B cell (primary cell): ENCODE measurements at regions of chr11 and their contacts with region 1.

Region 1: DNA sequence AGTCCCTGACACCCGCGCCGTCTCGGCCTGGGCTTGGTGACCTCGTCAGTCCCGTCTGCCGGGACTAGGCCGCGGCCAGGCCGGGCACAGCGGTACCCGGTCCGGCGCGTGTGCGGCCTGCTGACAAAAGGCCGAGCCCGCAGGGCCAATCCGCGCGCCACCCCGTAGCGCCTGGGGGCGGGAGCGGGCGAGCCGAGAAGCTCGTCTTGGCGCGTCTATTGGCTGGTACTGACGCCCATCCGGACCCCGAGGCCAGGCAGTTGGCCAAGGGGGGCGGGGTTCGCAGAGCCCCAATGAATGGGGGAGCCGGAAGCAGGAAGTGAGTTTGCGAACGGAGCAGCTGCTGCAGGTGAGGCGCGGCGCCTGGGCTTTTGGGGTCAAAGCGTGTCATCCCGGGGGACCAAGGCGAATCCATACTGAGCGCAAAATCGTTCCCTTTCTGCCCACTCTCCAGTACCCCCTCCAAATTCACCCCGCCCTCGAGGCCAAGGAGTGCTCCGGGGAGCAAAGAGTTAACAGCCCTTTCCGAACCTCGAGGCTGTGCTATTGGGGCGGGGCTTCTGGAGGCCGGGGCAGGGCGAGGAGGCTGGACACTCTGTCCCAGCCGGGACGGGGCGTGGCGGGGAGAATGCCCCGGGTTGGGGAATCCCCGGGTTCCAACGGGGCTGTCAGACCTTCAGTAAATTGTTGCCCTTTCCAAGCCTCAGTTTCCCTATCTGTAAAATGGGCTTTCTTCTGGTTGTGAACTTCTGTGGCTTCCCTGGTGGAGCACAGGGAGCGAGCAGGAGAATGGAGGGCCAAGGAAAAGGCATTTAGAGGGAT is at the start of gene DPP3:
- DNase-seq: peak; percentile 96
- ATAC-seq: peak; percentile 97
- H3K4me3 ChIP-seq: peak within 1 kb of the TSS; percentile 36 to 92 (median 71)
- H3K4me3 Mint-ChIP-seq: peak within 1 kb of the TSS; percentile 92
- H3K27ac ChIP-seq: peak within 1 kb of the TSS; percentile 63 to 85
- H3K27ac Mint-ChIP-seq: peak within 1 kb of the TSS; percentile 93
- H3K4me1 ChIP-seq: peaks cover 10 to 20% of the 10 kb centered on the region in 2 donors
- H3K4me1 Mint-ChIP-seq: peaks cover 20% of the 10 kb centered on the region
- H3K27me3 ChIP-seq: no peaks in the 10 kb centered on the region
- H3K27me3 Mint-ChIP-seq: no peaks in the 10 kb centered on the region
- CTCF ChIP-seq: no peak
- total RNA-seq, gene DPP3: 21.5 and 22.7 TPM in 2 replicates

Region 2: GRCh38 chr11:66510271-66510989 is 30.1 kb after region 1 on chr11 and contains the start of gene BBS1:
- CTCF ChIA-PET with region 1: interaction called, 3 read pairs
- POLR2A ChIA-PET with region 1: interaction called, 4 read pairs
- intact Hi-C with region 1: loop called (anchors 1 kb)
- DNase-seq: peak; percentile 87
- ATAC-seq: peak; percentile 94
- H3K4me3 ChIP-seq: peak within 1 kb of the TSS; percentile 55 to 89 (median 85)
- H3K4me3 Mint-ChIP-seq: peak within 1 kb of the TSS; percentile 91
- H3K27ac ChIP-seq: peak within 1 kb of the TSS in 1 of 2 donors; percentile 40
- H3K27ac Mint-ChIP-seq: peak within 1 kb of the TSS; percentile 61
- H3K4me1 ChIP-seq: peaks cover 11 to 14% of the 10 kb centered on the region in 2 donors
- H3K4me1 Mint-ChIP-seq: peaks cover 16% of the 10 kb centered on the region
- H3K27me3 ChIP-seq: no peaks in the 10 kb centered on the region
- H3K27me3 Mint-ChIP-seq: no peaks in the 10 kb centered on the region
- CTCF ChIP-seq: no peak
- total RNA-seq, gene BBS1: 52.5 and 56.3 TPM in 2 replicates